ENCODE measurements at regions of chr3 and their contacts with region 1.

Region 1: GRCh38 chr3:32374788-32375595 is 16.7 kb upstream of the CMTM7 start:
- DNase-seq: peak; percentile 86
- ATAC-seq: peak; percentile 70
- H3K4me3 Mint-ChIP-seq: no peak overlapping the region
- H3K27ac Mint-ChIP-seq: no peak overlapping the region
- H3K4me1 Mint-ChIP-seq: peaks cover 24% of the 10 kb centered on the region
- H3K27me3 Mint-ChIP-seq: peaks cover 10% of the 10 kb centered on the region

Region 2: GRCh38 chr3:32334675-32335074 is 40.3 kb before region 1 on chr3:
- CTCF ChIA-PET with region 1: interaction called, 11 read pairs
- POLR2A ChIA-PET with region 1: no interaction called
- DNase-seq: peak; percentile 56
- ATAC-seq: peak; percentile 60
- H3K4me3 Mint-ChIP-seq: no peak overlapping the region
- H3K27ac Mint-ChIP-seq: no peak overlapping the region
- H3K4me1 Mint-ChIP-seq: peaks cover 18% of the 10 kb centered on the region
- H3K27me3 Mint-ChIP-seq: no peaks in the 10 kb centered on the region

Region 3: GRCh38 chr3:32391643-32392535 is 16.9 kb after region 1 on chr3 and contains the start of gene CMTM7:
- CTCF ChIA-PET with region 1: interaction called, 86 read pairs
- POLR2A ChIA-PET with region 1: interaction called, 5 read pairs
- DNase-seq: peak; percentile 75
- ATAC-seq: peak; percentile 84
- H3K4me3 Mint-ChIP-seq: peak within 1 kb of the TSS; percentile 98
- H3K27ac Mint-ChIP-seq: peak within 1 kb of the TSS; percentile 92
- H3K4me1 Mint-ChIP-seq: peaks cover 56% of the 10 kb centered on the region
- H3K27me3 Mint-ChIP-seq: no peaks in the 10 kb centered on the region
- total RNA-seq, gene CMTM7: 38.3 to 42.3 TPM

Region 4: DNA sequence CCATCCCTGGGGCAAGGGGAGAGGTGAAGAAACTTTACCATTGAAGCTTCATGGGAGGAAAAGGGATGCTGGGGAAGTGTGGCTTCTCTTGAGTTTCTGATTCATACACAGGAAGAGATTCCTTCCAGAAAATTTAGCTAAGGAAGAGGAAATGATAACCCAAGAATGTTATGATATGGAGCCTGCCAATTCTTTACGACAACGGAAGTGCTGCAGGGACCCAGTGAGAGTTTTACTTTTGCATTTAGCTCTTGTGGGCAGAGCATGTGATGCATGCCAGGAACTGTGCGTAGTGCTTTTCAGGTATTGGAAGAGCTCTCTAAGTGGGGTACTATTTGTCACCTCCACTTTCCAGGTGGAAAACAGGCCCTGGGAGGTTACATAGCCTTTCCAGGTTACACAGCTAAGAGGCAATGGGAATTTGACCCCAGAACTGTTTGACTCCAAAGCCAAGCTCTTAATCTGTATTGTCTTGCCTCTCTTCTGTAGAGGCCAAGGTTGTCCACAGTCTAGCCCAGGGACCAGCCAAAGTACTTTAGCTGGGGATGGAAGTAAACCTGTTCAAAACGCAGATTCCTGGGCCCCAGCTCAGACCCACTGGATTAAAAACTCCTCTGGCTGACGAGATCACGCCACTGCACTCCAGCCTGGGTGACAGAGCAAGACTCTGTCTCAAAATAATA is 39.7 kb after region 1 on chr3:
- CTCF ChIA-PET with region 1: interaction called, 10 read pairs
- POLR2A ChIA-PET with region 1: interaction called, 4 read pairs
- DNase-seq: peak; percentile 73
- ATAC-seq: peak; percentile 91
- H3K4me3 Mint-ChIP-seq: peak overlapping the region; percentile 40
- H3K27ac Mint-ChIP-seq: peak overlapping the region; percentile 83
- H3K4me1 Mint-ChIP-seq: peaks cover 66% of the 10 kb centered on the region
- H3K27me3 Mint-ChIP-seq: no peaks in the 10 kb centered on the region

Region 5: DNA sequence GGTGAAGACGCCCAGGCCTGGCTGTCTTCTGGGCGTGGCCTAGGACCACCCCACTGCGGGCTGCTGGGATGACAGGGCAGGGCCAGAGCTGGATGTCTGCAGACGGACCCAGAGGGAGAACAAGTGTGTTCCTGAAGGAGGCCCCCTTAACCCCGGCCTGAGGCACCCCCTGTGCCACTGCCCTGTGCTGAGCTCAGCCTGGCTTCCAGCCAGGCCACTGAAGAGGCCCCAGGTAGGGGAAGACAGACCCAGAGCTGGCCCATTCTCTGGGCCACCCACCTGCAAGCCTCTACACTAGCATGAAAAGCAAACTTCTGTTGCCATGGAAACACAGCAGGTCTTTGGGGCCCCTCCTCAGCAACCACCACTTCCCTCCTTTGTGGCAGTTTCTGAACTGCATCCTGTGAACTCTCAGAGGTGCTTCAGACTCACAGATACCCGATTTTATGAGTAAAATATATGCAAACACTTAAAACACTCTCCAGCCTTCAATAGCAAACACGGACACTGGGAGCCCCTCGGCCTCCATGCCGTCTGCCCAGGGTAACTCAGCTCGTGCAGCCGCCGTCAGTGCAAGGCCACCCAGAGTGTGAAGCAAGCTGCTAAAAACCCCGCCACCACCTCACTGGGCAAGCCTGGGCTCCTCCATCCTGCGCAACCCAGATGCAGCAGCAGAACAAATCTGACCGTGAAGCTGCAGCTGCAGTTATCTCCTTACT is 85.2 kb after region 1 on chr3:
- CTCF ChIA-PET with region 1: interaction called, 16 read pairs
- POLR2A ChIA-PET with region 1: interaction called, 6 read pairs
- DNase-seq: peak; percentile 92
- ATAC-seq: peak; percentile 85
- H3K4me3 Mint-ChIP-seq: peak overlapping the region; percentile 80
- H3K27ac Mint-ChIP-seq: no peak overlapping the region
- H3K4me1 Mint-ChIP-seq: peaks cover 33% of the 10 kb centered on the region
- H3K27me3 Mint-ChIP-seq: no peaks in the 10 kb centered on the region

Region 6: GRCh38 chr3:32502118-32502945 is 127.3 kb after region 1 on chr3 and contains the start of gene CMTM6:
- CTCF ChIA-PET with region 1: interaction called, 13 read pairs
- POLR2A ChIA-PET with region 1: no interaction called
- DNase-seq: peak; percentile 80
- ATAC-seq: peak; percentile 84
- H3K4me3 Mint-ChIP-seq: peak within 1 kb of the TSS; percentile 99
- H3K27ac Mint-ChIP-seq: peak within 1 kb of the TSS; percentile 96
- H3K4me1 Mint-ChIP-seq: peaks cover 34% of the 10 kb centered on the region
- H3K27me3 Mint-ChIP-seq: peaks cover 4% of the 10 kb centered on the region
- total RNA-seq, gene CMTM6: 49.1 to 51.5 TPM

Region 7: DNA sequence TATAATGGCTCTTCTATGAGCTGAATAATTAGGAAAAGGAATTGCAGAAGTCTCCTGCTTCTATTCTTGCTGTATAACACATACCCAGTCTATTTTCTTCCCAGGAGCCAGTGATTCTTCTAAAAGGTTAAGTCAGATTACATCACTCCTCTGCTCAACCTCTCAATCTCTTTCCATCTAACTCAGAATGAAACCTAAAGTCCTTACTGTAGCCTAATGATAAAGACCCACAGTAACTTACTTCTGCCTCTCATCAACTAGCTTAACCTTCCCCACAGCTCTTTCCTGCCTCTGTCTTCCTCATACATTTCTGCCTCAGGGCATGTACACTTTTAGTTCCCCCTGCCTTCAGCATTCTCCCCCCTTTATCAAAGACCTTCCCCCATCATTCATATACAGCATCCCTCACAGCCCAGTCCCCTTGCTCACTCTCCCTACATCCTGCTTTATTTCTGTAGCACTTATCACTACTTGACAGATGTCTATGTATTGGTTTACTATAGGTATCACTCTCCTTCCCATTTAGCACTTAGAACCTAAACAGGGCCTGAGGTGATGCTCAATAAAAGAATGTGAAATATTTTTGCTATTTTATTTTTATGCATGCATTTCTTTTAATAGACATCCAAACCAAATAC is 156.1 kb after region 1 on chr3:
- CTCF ChIA-PET with region 1: no interaction called
- POLR2A ChIA-PET with region 1: no interaction called
- DNase-seq: no peak
- ATAC-seq: peak; percentile 23
- H3K4me3 Mint-ChIP-seq: no peak overlapping the region
- H3K27ac Mint-ChIP-seq: no peak overlapping the region
- H3K4me1 Mint-ChIP-seq: peaks cover 12% of the 10 kb centered on the region
- H3K27me3 Mint-ChIP-seq: no peaks in the 10 kb centered on the region